ENCODE measurements at regions of chrX and their contacts with region 1.

Region 1: DNA sequence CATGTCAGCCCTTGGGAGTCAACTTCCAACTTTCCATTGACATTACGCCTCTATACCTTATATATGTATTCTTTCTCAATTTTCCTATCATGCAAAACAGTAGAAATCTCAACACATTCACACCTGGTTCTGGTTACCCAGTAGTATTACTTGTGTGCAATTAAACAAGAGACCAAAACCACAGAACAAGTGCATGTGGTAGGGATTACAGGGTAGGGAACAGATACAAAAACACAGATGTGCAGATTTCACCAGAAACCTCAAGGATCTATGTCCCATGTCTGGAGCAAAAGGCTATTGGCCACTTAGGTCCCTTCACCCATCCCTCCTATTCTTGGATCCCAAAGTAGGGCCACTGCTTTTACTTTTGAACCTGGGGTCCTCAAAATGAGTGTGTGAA is 143.6 kb upstream of the ZCCHC13 start:
- DNase-seq: no peak
- ATAC-seq: peak; percentile 37 to 61
- H3K4me3 ChIP-seq: no peak overlapping the region
- H3K27ac ChIP-seq: peak overlapping the region; percentile 72 to 81 (median 75)
- H3K4me1 ChIP-seq: peaks cover 6 to 10% of the 10 kb centered on the region in 2 donors
- H3K27me3 ChIP-seq: no peaks in the 10 kb centered on the region
- CTCF ChIP-seq: no peak
- POLR2A ChIP-seq: no peak

Region 2: GRCh38 chrX:74232859-74233258 is 72.5 kb after region 1 on chrX:
- in situ Hi-C with region 1: no loop called
- intact Hi-C with region 1: loop called (anchors 10 kb)
- DNase-seq: no peak
- ATAC-seq: no peak
- H3K4me3 ChIP-seq: no peak overlapping the region
- H3K27ac ChIP-seq: peak overlapping the region in 1 of 4 donors; percentile 18
- H3K4me1 ChIP-seq: peaks cover 0 to 3% of the 10 kb centered on the region in 2 donors
- H3K27me3 ChIP-seq: no peaks in the 10 kb centered on the region
- CTCF ChIP-seq: no peak
- POLR2A ChIP-seq: no peak